CD4-positive, alpha-beta memory T cell (primary cell): ENCODE measurements at regions of chr11 and their contacts with region 1.

Region 1: GRCh38 chr11:250740-251299 is 14.0 kb downstream of the PSMD13 start:
- DNase-seq: peak; percentile 75 to 84 (median 81)
- H3K4me3 ChIP-seq: no peak overlapping the region
- H3K4me3 Mint-ChIP-seq: no peak overlapping the region
- H3K27ac ChIP-seq: peak overlapping the region; percentile 8
- H3K27ac Mint-ChIP-seq: peak overlapping the region; percentile 71 to 91 (median 81)
- H3K4me1 ChIP-seq: peaks cover 5% of the 10 kb centered on the region
- H3K4me1 Mint-ChIP-seq: peaks cover 6 to 9% (median 7%) of the 10 kb centered on the region in 4 donors
- H3K27me3 ChIP-seq: no peaks in the 10 kb centered on the region
- H3K27me3 Mint-ChIP-seq: no peaks in the 10 kb centered on the region

Region 2: GRCh38 chr11:279966-280582 is 29.3 kb after region 1 on chr11:
- CTCF ChIA-PET with region 1: interaction called, 81 read pairs
- POLR2A ChIA-PET with region 1: interaction called, 36 read pairs
- intact Hi-C with region 1: loop called (anchors 2 kb)
- DNase-seq: peak in 4 of 5 donors; percentile 55 to 61 (median 57)
- H3K4me3 ChIP-seq: peak overlapping the region in 1 of 2 donors; percentile 59
- H3K4me3 Mint-ChIP-seq: peak overlapping the region; percentile 84 to 91 (median 88)
- H3K27ac ChIP-seq: no peak overlapping the region
- H3K27ac Mint-ChIP-seq: peak overlapping the region in 4 of 7 donors; percentile 70 to 92 (median 84)
- H3K4me1 ChIP-seq: peaks cover 60% of the 10 kb centered on the region
- H3K4me1 Mint-ChIP-seq: peaks cover 30 to 61% (median 46%) of the 10 kb centered on the region in 4 donors
- H3K27me3 ChIP-seq: no peaks in the 10 kb centered on the region
- H3K27me3 Mint-ChIP-seq: no peaks in the 10 kb centered on the region

Region 3: DNA sequence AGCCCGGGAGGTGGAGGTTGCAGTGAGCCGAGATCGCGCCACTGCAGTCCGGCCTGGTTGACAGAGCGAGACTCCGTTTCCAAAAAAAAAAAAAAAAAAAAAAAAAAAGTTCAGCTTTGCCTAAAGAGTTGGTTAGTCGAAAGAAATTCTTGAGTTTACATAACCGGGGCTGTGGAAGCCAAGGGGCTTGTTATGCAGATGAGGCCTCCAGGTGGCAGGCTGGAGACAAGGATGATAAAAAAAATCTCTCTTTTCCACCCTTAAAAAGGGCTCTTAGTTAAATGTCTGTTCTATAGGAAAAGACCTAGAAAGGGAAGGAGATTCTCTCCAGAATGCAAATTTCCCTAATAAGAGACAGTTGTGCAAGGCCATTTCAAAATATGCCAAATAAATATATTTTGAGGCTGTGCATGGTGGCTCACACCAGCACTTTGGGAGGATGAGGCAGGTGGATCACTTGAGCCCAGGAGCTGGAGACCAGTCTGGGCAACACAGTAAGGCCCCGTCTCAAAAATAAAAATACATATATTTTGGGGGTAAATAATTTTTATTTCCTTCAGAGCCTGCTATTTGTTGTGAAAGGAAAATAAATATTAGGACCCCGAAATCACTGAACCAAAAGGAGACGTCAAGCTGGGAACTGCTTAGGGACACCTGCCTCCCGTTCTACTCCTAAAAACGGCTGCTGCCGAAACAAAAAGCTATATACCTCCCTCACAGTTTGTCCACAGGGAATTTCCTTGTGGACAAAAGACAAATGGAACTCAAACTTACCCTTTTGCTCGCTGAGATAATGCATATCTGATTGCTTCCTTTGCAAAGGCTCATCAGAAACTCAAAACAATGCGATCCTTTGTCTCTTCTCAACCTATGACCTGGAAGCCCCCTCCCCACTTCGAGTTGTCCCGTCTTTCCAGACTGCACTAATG is 54.4 kb after region 1 on chr11:
- CTCF ChIA-PET with region 1: interaction called, 38 read pairs
- POLR2A ChIA-PET with region 1: interaction called, 8 read pairs
- intact Hi-C with region 1: no loop called
- DNase-seq: peak; percentile 64 to 75 (median 67)
- H3K4me3 ChIP-seq: no peak overlapping the region
- H3K4me3 Mint-ChIP-seq: peak overlapping the region in 5 of 8 donors; percentile 36 to 76 (median 52)
- H3K27ac ChIP-seq: peak overlapping the region; percentile 6
- H3K27ac Mint-ChIP-seq: peak overlapping the region; percentile 1 to 89 (median 78)
- H3K4me1 ChIP-seq: peaks cover 42% of the 10 kb centered on the region
- H3K4me1 Mint-ChIP-seq: peaks cover 20 to 58% (median 34%) of the 10 kb centered on the region in 4 donors
- H3K27me3 ChIP-seq: no peaks in the 10 kb centered on the region
- H3K27me3 Mint-ChIP-seq: peaks cover 0 to 3% of the 10 kb centered on the region in 2 donors

Region 4: GRCh38 chr11:355581-356458 is 105.0 kb after region 1 on chr11:
- CTCF ChIA-PET with region 1: interaction called, 29 read pairs
- POLR2A ChIA-PET with region 1: interaction called, 15 read pairs
- intact Hi-C with region 1: loop called (anchors 1 kb)
- DNase-seq: peak; percentile 85 to 90 (median 86)
- H3K4me3 ChIP-seq: peak overlapping the region in 1 of 2 donors; percentile 59
- H3K4me3 Mint-ChIP-seq: peak overlapping the region; percentile 77 to 91 (median 84)
- H3K27ac ChIP-seq: peak overlapping the region; percentile 89
- H3K27ac Mint-ChIP-seq: peak overlapping the region in 6 of 7 donors; percentile 96 to 99 (median 97)
- H3K4me1 ChIP-seq: peaks cover 20% of the 10 kb centered on the region
- H3K4me1 Mint-ChIP-seq: peaks cover 7 to 50% (median 29%) of the 10 kb centered on the region in 4 donors
- H3K27me3 ChIP-seq: no peaks in the 10 kb centered on the region
- H3K27me3 Mint-ChIP-seq: no peaks in the 10 kb centered on the region

Region 5: GRCh38 chr11:396948-397548 is 146.2 kb after region 1 on chr11:
- CTCF ChIA-PET with region 1: interaction called, 14 read pairs
- POLR2A ChIA-PET with region 1: no interaction called
- intact Hi-C with region 1: no loop called
- DNase-seq: peak; percentile 41 to 57 (median 46)
- H3K4me3 ChIP-seq: peak overlapping the region in 1 of 2 donors; percentile 35
- H3K4me3 Mint-ChIP-seq: peak overlapping the region in 5 of 8 donors; percentile 13 to 54 (median 21)
- H3K27ac ChIP-seq: no peak overlapping the region
- H3K27ac Mint-ChIP-seq: no peak overlapping the region
- H3K4me1 ChIP-seq: peaks cover 4% of the 10 kb centered on the region
- H3K4me1 Mint-ChIP-seq: peaks cover 0 to 10% (median 0%) of the 10 kb centered on the region in 4 donors
- H3K27me3 ChIP-seq: no peaks in the 10 kb centered on the region
- H3K27me3 Mint-ChIP-seq: no peaks in the 10 kb centered on the region